Posterior vena cava (tissue), 2 donors: ENCODE measurements at regions of chr5 and their contacts with region 1.

Region 1: DNA sequence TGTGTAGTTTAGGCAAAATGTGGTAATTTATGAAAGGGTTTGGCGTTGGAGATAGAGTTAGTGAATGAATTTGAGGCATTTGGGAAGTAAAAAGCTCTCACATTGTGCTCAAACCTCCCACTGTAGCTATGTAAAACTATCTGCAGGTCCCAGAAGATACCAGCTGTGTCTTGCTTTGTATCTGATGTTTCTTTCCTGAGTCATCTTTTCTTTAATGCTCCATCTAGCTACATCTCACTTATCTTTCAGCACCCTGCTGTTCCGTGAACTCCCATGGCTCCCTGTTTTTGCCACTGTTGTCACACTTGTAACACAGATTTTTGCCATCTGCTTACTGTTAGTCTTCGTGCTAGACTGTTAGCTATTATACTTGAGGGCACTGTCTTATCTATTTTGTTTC is 253.1 kb downstream of the NPR3 start:
- DNase-seq: no peak

Region 2: GRCh38 chr5:31911291-31912265 is 1052.7 kb before region 1 on chr5:
- intact Hi-C with region 1: no loop called
- DNase-seq: no peak

Region 3: GRCh38 chr5:32044939-32045338 is 919.3 kb before region 1 on chr5:
- intact Hi-C with region 1: loop called in 1 of 2 experiments (anchors 5 kb)
- DNase-seq: no peak

Region 4: GRCh38 chr5:32932241-32932935 is 31.9 kb before region 1 on chr5:
- intact Hi-C with region 1: no loop called
- DNase-seq: no peak

Region 5: DNA sequence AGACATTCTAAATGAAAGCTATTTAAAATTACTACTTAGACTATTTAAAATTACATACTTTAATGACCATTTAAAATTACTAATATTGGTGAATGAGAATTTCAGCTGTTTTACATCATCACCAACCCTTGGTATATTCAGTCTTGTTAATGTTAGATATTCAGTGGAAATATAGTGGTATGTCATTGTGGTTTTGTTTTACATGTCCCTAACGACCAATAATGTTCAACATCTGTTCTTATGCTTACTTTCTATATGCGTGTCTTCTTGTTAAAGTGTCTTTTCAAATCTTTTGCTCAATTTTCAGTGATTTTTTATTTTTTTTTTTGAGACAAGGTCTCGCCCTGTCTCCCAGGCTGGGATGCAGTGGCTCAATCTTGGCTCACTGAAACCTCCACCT is 197.2 kb after region 1 on chr5:
- intact Hi-C with region 1: no loop called
- DNase-seq: no peak